ENCODE measurements at regions of chr14 and their contacts with region 1.

Region 1: GRCh38 chr14:35416108-35416750 is 11.7 kb upstream of the NFKBIA start:
- DNase-seq: peak; percentile 88
- ATAC-seq: peak; percentile 67
- H3K4me3 Mint-ChIP-seq: peak overlapping the region; percentile 72
- H3K27ac Mint-ChIP-seq: peak overlapping the region; percentile 98
- H3K4me1 Mint-ChIP-seq: peaks cover 55% of the 10 kb centered on the region
- H3K27me3 Mint-ChIP-seq: no peaks in the 10 kb centered on the region
- CTCF ChIP-seq: no peak

Region 2: GRCh38 chr14:34982417-34983147 is 433.6 kb before region 1 on chr14 and contains the start of gene SRP54:
- CTCF ChIA-PET with region 1: no interaction called
- POLR2A ChIA-PET with region 1: interaction called, 6 read pairs
- intact Hi-C with region 1: loop called (anchors 5 kb)
- DNase-seq: peak; percentile 100
- ATAC-seq: peak; percentile 92
- H3K4me3 Mint-ChIP-seq: no peak within 1 kb of the TSS
- H3K27ac Mint-ChIP-seq: no peak within 1 kb of the TSS
- H3K4me1 Mint-ChIP-seq: peaks cover 10% of the 10 kb centered on the region
- H3K27me3 Mint-ChIP-seq: no peaks in the 10 kb centered on the region
- CTCF ChIP-seq: no peak
- total RNA-seq, gene SRP54: 79.6 to 79.8 TPM

Region 3: GRCh38 chr14:35121887-35122695 is 294.1 kb before region 1 on chr14 and contains the starts of genes PPP2R3C and PRORP:
- CTCF ChIA-PET with region 1: interaction called, 8 read pairs
- POLR2A ChIA-PET with region 1: interaction called, 4 read pairs
- intact Hi-C with region 1: loop called (anchors 5 kb)
- DNase-seq: peak; percentile 94
- ATAC-seq: peak; percentile 86
- H3K4me3 Mint-ChIP-seq: peak within 1 kb of the TSS; percentile 84
- H3K27ac Mint-ChIP-seq: peak within 1 kb of the TSS; percentile 99
- H3K4me1 Mint-ChIP-seq: peaks cover 58% of the 10 kb centered on the region
- H3K27me3 Mint-ChIP-seq: no peaks in the 10 kb centered on the region
- CTCF ChIP-seq: no peak
- total RNA-seq, gene PPP2R3C: 38.2 to 40.7 TPM
- total RNA-seq, gene PRORP: 30.6 to 34.4 TPM

Region 4: DNA sequence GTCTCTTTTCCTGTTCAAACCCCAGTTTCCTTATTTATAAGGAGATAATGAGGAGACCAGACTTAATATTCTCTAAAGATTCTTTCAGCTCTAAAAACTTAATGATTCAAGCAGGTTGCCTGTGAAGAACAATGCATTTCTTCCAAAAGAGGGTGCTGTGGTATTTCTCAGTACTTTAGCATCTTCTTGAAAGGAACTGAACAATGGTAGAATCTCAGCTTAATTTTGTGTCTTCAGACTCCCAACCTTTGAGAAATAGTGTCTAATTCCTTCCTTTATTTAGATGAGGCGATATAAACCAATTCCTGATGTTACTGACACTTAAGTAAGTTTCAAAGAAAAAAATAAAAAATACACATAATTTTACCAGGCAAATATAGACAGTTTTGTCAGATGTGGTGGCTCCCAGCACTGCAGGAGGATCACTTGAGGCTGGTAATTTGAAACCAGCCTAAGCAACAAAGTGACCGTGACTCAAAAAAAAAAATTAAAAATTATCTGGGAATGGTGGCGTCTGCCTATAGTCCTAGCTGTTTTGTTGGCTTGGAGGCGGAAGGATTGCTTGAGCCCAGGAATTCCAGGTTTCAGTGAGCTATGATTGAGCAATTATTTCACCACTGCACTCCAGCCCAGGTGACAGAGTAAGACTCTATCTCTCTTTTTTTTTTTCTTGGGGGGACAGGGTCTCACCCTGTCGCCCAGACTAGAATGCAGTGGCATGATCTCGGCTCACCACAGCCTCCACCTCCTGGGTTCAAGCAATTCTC is 200.9 kb before region 1 on chr14:
- CTCF ChIA-PET with region 1: interaction called, 11 read pairs
- POLR2A ChIA-PET with region 1: no interaction called
- intact Hi-C with region 1: no loop called
- DNase-seq: no peak
- ATAC-seq: no peak
- H3K4me3 Mint-ChIP-seq: no peak overlapping the region
- H3K27ac Mint-ChIP-seq: no peak overlapping the region
- H3K4me1 Mint-ChIP-seq: peaks cover 12% of the 10 kb centered on the region
- H3K27me3 Mint-ChIP-seq: no peaks in the 10 kb centered on the region
- CTCF ChIP-seq: no peak

Region 5: DNA sequence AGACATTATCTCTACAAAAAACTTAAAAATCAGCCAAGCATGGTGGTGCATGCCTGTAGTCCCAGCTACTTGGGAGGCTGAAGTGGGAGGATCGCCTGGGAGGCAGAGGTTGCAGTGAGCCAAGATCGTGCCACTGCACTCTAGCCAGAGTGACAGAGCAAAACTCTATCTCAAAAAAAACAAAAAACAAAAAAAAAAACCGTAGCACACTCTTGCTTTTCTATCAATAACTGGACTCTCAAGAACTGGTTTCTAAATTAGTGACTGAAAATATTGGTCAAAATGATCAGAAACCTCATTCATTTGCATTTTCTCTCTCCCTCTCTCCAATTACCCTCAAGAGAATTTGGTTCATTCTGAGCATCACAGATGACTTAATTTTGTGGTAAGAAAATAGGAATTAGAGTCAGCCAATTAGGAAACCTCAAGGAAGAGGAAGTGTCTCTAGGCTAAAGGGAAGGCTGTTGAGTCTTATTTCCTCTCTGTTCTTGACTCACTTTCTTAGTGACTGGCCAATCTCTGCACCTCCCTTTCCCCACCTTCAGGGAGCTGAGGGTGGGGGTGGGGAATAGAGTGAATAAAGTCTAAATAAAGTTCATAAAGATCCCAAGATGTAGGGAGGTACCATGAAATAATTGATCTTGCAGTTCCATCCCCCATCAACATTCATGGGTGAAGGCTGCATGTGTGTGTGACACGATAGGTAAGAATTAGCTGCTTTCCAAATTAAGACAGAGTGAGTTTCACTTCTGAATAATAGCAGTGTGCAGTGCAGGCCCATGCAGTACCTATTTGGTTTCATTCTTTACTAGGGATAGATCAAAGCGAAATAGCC is 130.8 kb before region 1 on chr14:
- CTCF ChIA-PET with region 1: interaction called, 14 read pairs
- POLR2A ChIA-PET with region 1: interaction called, 17 read pairs
- intact Hi-C with region 1: loop called (anchors 5 kb)
- DNase-seq: peak; percentile 54
- ATAC-seq: peak; percentile 63
- H3K4me3 Mint-ChIP-seq: peak overlapping the region; percentile 51
- H3K27ac Mint-ChIP-seq: peak overlapping the region; percentile 97
- H3K4me1 Mint-ChIP-seq: peaks cover 50% of the 10 kb centered on the region
- H3K27me3 Mint-ChIP-seq: no peaks in the 10 kb centered on the region
- CTCF ChIP-seq: no peak

Region 6: DNA sequence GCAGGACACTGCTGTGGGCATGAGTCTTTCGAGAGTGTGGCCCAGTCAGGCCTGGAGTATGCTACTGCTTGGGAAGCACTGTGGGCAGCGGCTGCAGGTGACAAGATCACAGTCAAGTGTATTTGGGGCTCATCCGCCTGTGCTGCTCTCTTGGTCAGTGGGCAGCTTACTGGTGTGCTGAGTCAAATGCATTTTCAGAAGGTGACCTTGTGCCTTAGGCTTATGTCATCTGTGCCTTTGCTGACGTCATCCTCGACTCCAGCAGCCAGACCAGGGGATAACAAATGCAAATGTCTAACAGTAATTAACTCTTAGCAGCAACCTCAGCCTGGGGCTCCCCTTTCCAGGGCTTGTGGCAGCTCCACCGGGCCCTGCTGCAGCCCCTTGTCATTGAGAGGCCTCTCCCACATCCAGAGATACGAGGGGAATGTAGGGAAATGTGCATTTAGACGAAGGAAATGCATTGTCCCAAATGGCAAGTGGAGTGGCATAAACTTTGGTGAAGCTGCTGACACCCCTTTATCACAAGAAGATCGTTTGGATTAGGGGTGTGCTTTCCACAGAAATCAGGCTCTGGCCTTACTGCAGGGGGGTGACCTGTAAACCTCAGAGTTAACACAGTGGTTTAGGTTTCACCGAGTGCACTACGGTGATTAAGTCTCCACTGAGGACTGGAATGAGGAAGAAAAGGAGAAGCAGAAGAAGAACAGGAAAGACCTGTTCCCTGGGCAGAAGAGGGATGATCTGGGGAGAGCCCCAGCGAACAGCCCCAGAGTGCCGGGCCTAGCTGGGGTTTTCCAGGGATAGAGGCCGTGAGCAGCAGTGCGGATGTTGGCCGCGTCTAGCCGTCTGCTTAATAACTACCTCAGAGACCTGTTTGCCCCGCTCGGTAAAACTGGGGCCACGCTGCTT is 84.4 kb before region 1 on chr14:
- CTCF ChIA-PET with region 1: interaction called, 11 read pairs
- POLR2A ChIA-PET with region 1: interaction called, 7 read pairs
- intact Hi-C with region 1: no loop called
- DNase-seq: no peak
- ATAC-seq: no peak
- H3K4me3 Mint-ChIP-seq: no peak overlapping the region
- H3K27ac Mint-ChIP-seq: peak overlapping the region; percentile 95
- H3K4me1 Mint-ChIP-seq: peaks cover 30% of the 10 kb centered on the region
- H3K27me3 Mint-ChIP-seq: no peaks in the 10 kb centered on the region
- CTCF ChIP-seq: no peak

Region 7: DNA sequence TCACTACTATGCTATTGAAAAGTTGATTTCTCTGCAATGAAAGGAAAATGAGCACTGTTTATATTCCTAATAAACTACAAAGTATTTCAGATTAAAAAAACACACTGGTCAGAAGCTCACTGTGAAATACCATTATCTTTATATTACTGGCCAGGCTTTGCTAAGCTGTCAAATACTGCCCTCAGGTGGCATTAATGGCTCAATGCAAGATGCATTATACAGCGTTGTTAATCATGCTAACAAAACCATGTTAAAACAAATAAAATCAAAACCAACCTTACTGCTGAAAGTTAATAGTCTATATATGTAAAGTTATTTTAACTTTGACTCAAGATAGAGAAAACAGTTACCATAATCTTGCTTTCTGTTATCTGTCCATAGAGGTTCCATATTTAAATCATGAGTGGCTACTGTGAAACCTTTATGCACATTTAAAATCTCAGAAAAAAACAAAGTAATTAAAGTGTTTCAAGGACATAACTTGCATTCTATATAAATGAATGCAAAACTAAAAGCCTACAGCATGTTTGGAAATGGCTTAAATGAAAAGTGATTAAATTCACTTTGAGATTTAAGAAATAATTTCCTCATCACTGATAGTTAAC is 271.2 kb after region 1 on chr14:
- CTCF ChIA-PET with region 1: interaction called, 5 read pairs
- POLR2A ChIA-PET with region 1: interaction called, 3 read pairs
- intact Hi-C with region 1: loop called (anchors 10 kb)
- DNase-seq: peak; percentile 59
- ATAC-seq: peak; percentile 79
- H3K4me3 Mint-ChIP-seq: no peak overlapping the region
- H3K27ac Mint-ChIP-seq: no peak overlapping the region
- H3K4me1 Mint-ChIP-seq: peaks cover 9% of the 10 kb centered on the region
- H3K27me3 Mint-ChIP-seq: no peaks in the 10 kb centered on the region
- CTCF ChIP-seq: peak; percentile 85

Measured in activated CD8-positive, alpha-beta T cell treated with anti-CD3 and anti-CD28 coated beads for 36 hours (primary cell).